ENCODE measurements at regions of chr1 and their contacts with region 1.

Region 1: GRCh38 chr1:24688621-24689195 is 45.6 kb downstream of the SRRM1 start:
- DNase-seq: peak; percentile 24 to 71 (median 37)
- H3K4me3 ChIP-seq: no peak overlapping the region
- H3K4me3 Mint-ChIP-seq: no peak overlapping the region
- H3K27ac ChIP-seq: no peak overlapping the region
- H3K27ac Mint-ChIP-seq: peak overlapping the region in 1 of 8 donors; percentile 72
- H3K4me1 ChIP-seq: no peaks in the 10 kb centered on the region
- H3K4me1 Mint-ChIP-seq: no peaks in the 10 kb centered on the region
- H3K27me3 ChIP-seq: no peaks in the 10 kb centered on the region
- H3K27me3 Mint-ChIP-seq: peaks cover 0 to 1% of the 10 kb centered on the region in 2 donors

Region 2: DNA sequence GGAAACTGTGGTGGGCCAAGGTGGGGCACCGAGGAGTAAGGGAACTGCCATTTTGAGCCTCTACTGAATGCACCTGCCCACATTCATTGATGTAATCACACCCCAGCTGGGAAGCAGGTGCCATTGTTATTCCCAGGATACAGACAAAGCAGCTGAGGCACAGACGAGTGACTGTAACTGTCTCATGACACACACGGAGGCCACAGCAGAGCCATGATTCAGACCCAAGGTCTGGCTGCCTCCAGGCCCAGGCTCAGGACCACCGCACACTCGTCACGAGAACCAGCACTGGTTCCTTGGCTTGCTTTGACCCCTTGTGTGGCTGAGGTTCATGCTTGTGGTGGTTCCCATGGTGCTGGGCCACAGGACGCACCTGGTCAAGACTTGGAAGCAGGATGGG is 10.9 kb after region 1 on chr1:
- CTCF ChIA-PET with region 1: interaction called, 16 read pairs
- POLR2A ChIA-PET with region 1: no interaction called
- DNase-seq: no peak
- H3K4me3 ChIP-seq: no peak overlapping the region
- H3K4me3 Mint-ChIP-seq: no peak overlapping the region
- H3K27ac ChIP-seq: no peak overlapping the region
- H3K27ac Mint-ChIP-seq: no peak overlapping the region
- H3K4me1 ChIP-seq: no peaks in the 10 kb centered on the region
- H3K4me1 Mint-ChIP-seq: peaks cover 0 to 5% (median 2%) of the 10 kb centered on the region in 3 donors
- H3K27me3 ChIP-seq: no peaks in the 10 kb centered on the region
- H3K27me3 Mint-ChIP-seq: peaks cover 6 to 15% of the 10 kb centered on the region in 2 donors

Region 3: DNA sequence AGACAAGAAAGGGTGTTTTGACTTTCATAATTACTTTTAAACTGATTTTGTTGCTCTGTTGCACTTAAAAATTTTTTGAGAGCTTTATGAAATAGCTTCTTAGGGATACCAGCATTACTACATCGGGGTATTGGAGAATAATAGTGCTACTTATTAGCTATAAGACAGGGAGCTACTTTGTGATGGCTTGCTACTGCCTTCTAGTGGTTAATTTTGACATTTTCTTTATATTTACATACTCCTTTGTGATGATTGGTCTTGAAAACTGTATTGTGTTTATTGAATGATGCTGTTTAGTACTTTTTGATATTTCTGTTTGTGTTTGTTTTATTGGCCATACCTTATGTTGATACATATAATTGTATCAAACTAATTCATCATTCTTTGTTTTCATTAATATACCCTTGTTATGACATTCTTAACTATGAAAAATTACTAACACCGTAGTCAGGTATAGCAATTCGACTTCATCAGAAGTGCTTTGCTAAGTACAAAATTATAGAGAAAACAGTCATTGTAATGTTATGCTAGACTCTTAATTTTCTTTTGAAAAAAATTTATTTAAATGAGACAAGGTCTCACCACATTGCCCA is 142.1 kb after region 1 on chr1:
- CTCF ChIA-PET with region 1: interaction called, 123 read pairs
- POLR2A ChIA-PET with region 1: interaction called, 3 read pairs
- DNase-seq: peak in 2 of 5 donors; percentile 44 to 47
- H3K4me3 ChIP-seq: no peak overlapping the region
- H3K4me3 Mint-ChIP-seq: no peak overlapping the region
- H3K27ac ChIP-seq: no peak overlapping the region
- H3K27ac Mint-ChIP-seq: no peak overlapping the region
- H3K4me1 ChIP-seq: no peaks in the 10 kb centered on the region
- H3K4me1 Mint-ChIP-seq: no peaks in the 10 kb centered on the region
- H3K27me3 ChIP-seq: no peaks in the 10 kb centered on the region
- H3K27me3 Mint-ChIP-seq: peaks cover 0 to 35% of the 10 kb centered on the region in 2 donors

Region 4: GRCh38 chr1:24841593-24841992 is 152.9 kb after region 1 on chr1:
- CTCF ChIA-PET with region 1: interaction called, 48 read pairs
- POLR2A ChIA-PET with region 1: no interaction called
- DNase-seq: no peak
- H3K4me3 ChIP-seq: no peak overlapping the region
- H3K4me3 Mint-ChIP-seq: no peak overlapping the region
- H3K27ac ChIP-seq: no peak overlapping the region
- H3K27ac Mint-ChIP-seq: no peak overlapping the region
- H3K4me1 ChIP-seq: no peaks in the 10 kb centered on the region
- H3K4me1 Mint-ChIP-seq: peaks cover 2 to 5% (median 2%) of the 10 kb centered on the region in 3 donors
- H3K27me3 ChIP-seq: no peaks in the 10 kb centered on the region
- H3K27me3 Mint-ChIP-seq: peaks cover 2 to 10% of the 10 kb centered on the region in 2 donors

Region 5: GRCh38 chr1:24930204-24931145 is 241.8 kb after region 1 on chr1 and contains the start of gene RUNX3:
- CTCF ChIA-PET with region 1: no interaction called
- POLR2A ChIA-PET with region 1: no interaction called
- DNase-seq: peak; percentile 91 to 96 (median 95)
- H3K4me3 ChIP-seq: peak within 1 kb of the TSS; percentile 77
- H3K4me3 Mint-ChIP-seq: peak within 1 kb of the TSS; percentile 87 to 99 (median 97)
- H3K27ac ChIP-seq: peak within 1 kb of the TSS; percentile 89
- H3K27ac Mint-ChIP-seq: peak within 1 kb of the TSS; percentile 85 to 100 (median 100)
- H3K4me1 ChIP-seq: peaks cover 51% of the 10 kb centered on the region
- H3K4me1 Mint-ChIP-seq: peaks cover 34 to 69% (median 54%) of the 10 kb centered on the region in 3 donors
- H3K27me3 ChIP-seq: no peaks in the 10 kb centered on the region
- H3K27me3 Mint-ChIP-seq: peaks cover 0 to 10% of the 10 kb centered on the region in 2 donors
- total RNA-seq, gene RUNX3: 218 to 241 TPM

Measured in CD8-positive, alpha-beta memory T cell (primary cell).